CD8-positive, alpha-beta memory T cell (primary cell): ENCODE measurements at regions of chr1 and their contacts with region 1.

Region 1: GRCh38 chr1:115089420-115090185 is at the start of gene TSPAN2:
- DNase-seq: peak; percentile 61 to 81 (median 64)
- H3K4me3 ChIP-seq: peak within 1 kb of the TSS; percentile 63
- H3K4me3 Mint-ChIP-seq: peak within 1 kb of the TSS; percentile 79 to 94 (median 86)
- H3K27ac ChIP-seq: peak within 1 kb of the TSS; percentile 25
- H3K27ac Mint-ChIP-seq: peak within 1 kb of the TSS; percentile 73 to 96 (median 84)
- H3K4me1 ChIP-seq: peaks cover 26% of the 10 kb centered on the region
- H3K4me1 Mint-ChIP-seq: peaks cover 38 to 56% (median 54%) of the 10 kb centered on the region in 3 donors
- H3K27me3 ChIP-seq: no peaks in the 10 kb centered on the region
- H3K27me3 Mint-ChIP-seq: no peaks in the 10 kb centered on the region
- total RNA-seq, gene TSPAN2: 1.3 to 2.0 TPM

Region 2: GRCh38 chr1:115036814-115037507 is 52.6 kb before region 1 on chr1:
- CTCF ChIA-PET with region 1: no interaction called
- POLR2A ChIA-PET with region 1: no interaction called
- DNase-seq: no peak
- H3K4me3 ChIP-seq: no peak overlapping the region
- H3K4me3 Mint-ChIP-seq: no peak overlapping the region
- H3K27ac ChIP-seq: no peak overlapping the region
- H3K27ac Mint-ChIP-seq: no peak overlapping the region
- H3K4me1 ChIP-seq: no peaks in the 10 kb centered on the region
- H3K4me1 Mint-ChIP-seq: no peaks in the 10 kb centered on the region
- H3K27me3 ChIP-seq: no peaks in the 10 kb centered on the region
- H3K27me3 Mint-ChIP-seq: peaks cover 0 to 10% of the 10 kb centered on the region in 2 donors

Region 3: GRCh38 chr1:115052454-115053083 is 37.0 kb before region 1 on chr1:
- CTCF ChIA-PET with region 1: interaction called, 14 read pairs
- POLR2A ChIA-PET with region 1: no interaction called
- DNase-seq: peak; percentile 26 to 71 (median 34)
- H3K4me3 ChIP-seq: no peak overlapping the region
- H3K4me3 Mint-ChIP-seq: no peak overlapping the region
- H3K27ac ChIP-seq: no peak overlapping the region
- H3K27ac Mint-ChIP-seq: no peak overlapping the region
- H3K4me1 ChIP-seq: no peaks in the 10 kb centered on the region
- H3K4me1 Mint-ChIP-seq: peaks cover 2 to 5% (median 3%) of the 10 kb centered on the region in 3 donors
- H3K27me3 ChIP-seq: no peaks in the 10 kb centered on the region
- H3K27me3 Mint-ChIP-seq: peaks cover 0 to 1% of the 10 kb centered on the region in 2 donors